CD4-positive, alpha-beta T cell (primary cell): ENCODE measurements at regions of chr15 and their contacts with region 1.

Region 1: GRCh38 chr15:56052395-56053045 is 59.1 kb upstream of the NEDD4 start:
- DNase-seq: peak in 4 of 14 experiments; percentile 13 to 68 (median 58)
- ATAC-seq: peak; percentile 79
- H3K4me3 ChIP-seq: no peak overlapping the region
- H3K4me3 Mint-ChIP-seq: no peak overlapping the region
- H3K27ac ChIP-seq: no peak overlapping the region
- H3K27ac Mint-ChIP-seq: no peak overlapping the region
- H3K4me1 ChIP-seq: no peaks in the 10 kb centered on the region
- H3K4me1 Mint-ChIP-seq: no peaks in the 10 kb centered on the region
- H3K27me3 ChIP-seq: no peaks in the 10 kb centered on the region
- H3K27me3 Mint-ChIP-seq: no peaks in the 10 kb centered on the region
- CTCF ChIP-seq: peak; percentile 76

Region 2: GRCh38 chr15:55734641-55735040 is 317.9 kb before region 1 on chr15:
- CTCF ChIA-PET with region 1: no interaction called
- POLR2A ChIA-PET with region 1: no interaction called
- intact Hi-C with region 1: no loop called
- DNase-seq: no peak
- ATAC-seq: no peak
- H3K4me3 ChIP-seq: no peak overlapping the region
- H3K4me3 Mint-ChIP-seq: no peak overlapping the region
- H3K27ac ChIP-seq: no peak overlapping the region
- H3K27ac Mint-ChIP-seq: no peak overlapping the region
- H3K4me1 ChIP-seq: no peaks in the 10 kb centered on the region
- H3K4me1 Mint-ChIP-seq: no peaks in the 10 kb centered on the region
- H3K27me3 ChIP-seq: peaks cover 6 to 14% of the 10 kb centered on the region in 2 experiments
- H3K27me3 Mint-ChIP-seq: peaks cover 30% of the 10 kb centered on the region
- CTCF ChIP-seq: no peak

Region 3: DNA sequence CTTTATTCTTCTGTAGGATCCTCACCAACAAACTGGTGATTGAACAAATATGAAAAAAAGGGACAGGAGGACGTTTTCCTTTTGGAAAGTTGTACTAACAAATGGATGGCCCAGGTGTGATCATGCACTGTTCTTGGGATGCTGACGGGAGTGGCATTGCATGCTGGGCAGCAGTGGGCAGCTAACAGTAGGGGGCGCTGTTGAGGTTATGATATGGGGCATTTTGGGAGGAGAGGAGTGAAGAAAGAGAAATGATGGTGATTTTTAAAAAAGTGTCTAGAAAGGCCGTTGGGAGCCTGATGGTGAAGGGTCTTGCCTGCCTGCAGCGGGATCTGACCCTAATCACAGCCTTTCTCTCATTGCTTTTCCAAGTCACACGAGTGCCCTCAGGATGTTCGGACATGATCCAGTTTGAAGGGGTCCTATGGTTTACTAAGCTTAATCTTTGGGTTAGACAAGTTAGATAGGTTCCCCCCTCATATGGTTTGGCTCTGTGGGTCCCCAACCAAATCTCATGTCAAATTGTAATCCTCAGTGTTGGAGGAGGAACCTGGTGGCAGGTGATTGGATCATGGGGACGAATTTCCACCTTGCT is 263.4 kb before region 1 on chr15:
- CTCF ChIA-PET with region 1: no interaction called
- POLR2A ChIA-PET with region 1: no interaction called
- intact Hi-C with region 1: loop called (anchors 1 to 2 kb)
- DNase-seq: peak; percentile 9 to 58 (median 26)
- ATAC-seq: no peak
- H3K4me3 ChIP-seq: no peak overlapping the region
- H3K4me3 Mint-ChIP-seq: no peak overlapping the region
- H3K27ac ChIP-seq: no peak overlapping the region
- H3K27ac Mint-ChIP-seq: no peak overlapping the region
- H3K4me1 ChIP-seq: no peaks in the 10 kb centered on the region
- H3K4me1 Mint-ChIP-seq: no peaks in the 10 kb centered on the region
- H3K27me3 ChIP-seq: peaks cover 0 to 3% of the 10 kb centered on the region in 2 experiments
- H3K27me3 Mint-ChIP-seq: peaks cover 9% of the 10 kb centered on the region
- CTCF ChIP-seq: peak; percentile 55

Region 4: GRCh38 chr15:55846116-55846707 is 206.3 kb before region 1 on chr15:
- CTCF ChIA-PET with region 1: no interaction called
- POLR2A ChIA-PET with region 1: no interaction called
- intact Hi-C with region 1: loop called in 1 of 2 experiments (anchors 5 kb)
- DNase-seq: peak in 9 of 14 experiments; percentile 2 to 75 (median 20)
- ATAC-seq: peak; percentile 73
- H3K4me3 ChIP-seq: no peak overlapping the region
- H3K4me3 Mint-ChIP-seq: no peak overlapping the region
- H3K27ac ChIP-seq: no peak overlapping the region
- H3K27ac Mint-ChIP-seq: no peak overlapping the region
- H3K4me1 ChIP-seq: no peaks in the 10 kb centered on the region
- H3K4me1 Mint-ChIP-seq: no peaks in the 10 kb centered on the region
- H3K27me3 ChIP-seq: no peaks in the 10 kb centered on the region
- H3K27me3 Mint-ChIP-seq: no peaks in the 10 kb centered on the region
- CTCF ChIP-seq: peak; percentile 76

Region 5: DNA sequence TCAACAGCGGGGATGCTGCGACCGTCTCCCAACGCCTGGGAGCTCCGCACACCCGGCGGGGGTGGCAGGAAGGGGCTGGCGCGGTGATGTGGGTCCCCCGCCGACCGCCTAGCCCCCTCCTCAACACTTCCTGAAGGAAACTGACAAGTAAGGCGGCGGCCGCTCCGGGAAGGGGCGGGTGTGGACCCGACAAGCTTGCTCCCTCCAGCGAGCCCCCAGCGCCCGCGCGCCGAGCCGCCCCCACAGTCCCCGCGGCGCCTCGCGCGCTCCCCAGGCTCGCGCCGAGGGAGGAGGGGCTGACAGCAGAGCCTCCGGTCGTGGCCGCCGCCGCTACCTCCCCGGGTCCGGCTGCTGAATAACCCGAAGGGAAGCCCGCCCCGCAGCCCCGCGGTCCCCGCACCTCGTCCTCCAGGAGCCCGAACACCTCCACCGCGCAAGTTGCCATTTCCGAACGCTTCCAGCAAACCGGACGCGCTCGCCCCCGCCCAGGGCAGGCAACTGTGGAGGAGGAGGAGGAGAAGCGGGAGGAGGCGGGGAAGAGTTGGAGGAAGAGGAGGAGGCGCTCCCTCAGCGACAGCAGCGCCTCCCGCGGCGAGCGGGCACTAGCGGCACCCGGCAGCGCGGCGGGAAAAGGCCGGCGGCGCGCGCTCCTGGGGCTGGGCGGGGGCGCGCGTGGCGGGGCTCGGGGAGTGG is 59.3 kb before region 1 on chr15 and contains the start of gene NEDD4:
- CTCF ChIA-PET with region 1: interaction called, 3 read pairs
- POLR2A ChIA-PET with region 1: no interaction called
- intact Hi-C with region 1: loop called (anchors 2 kb)
- DNase-seq: peak; percentile 37 to 89 (median 62)
- ATAC-seq: peak; percentile 90
- H3K4me3 ChIP-seq: peak within 1 kb of the TSS; percentile 86
- H3K4me3 Mint-ChIP-seq: peak within 1 kb of the TSS; percentile 96
- H3K27ac ChIP-seq: no peak within 1 kb of the TSS
- H3K27ac Mint-ChIP-seq: peak within 1 kb of the TSS; percentile 21
- H3K4me1 ChIP-seq: peaks cover 9% of the 10 kb centered on the region
- H3K4me1 Mint-ChIP-seq: peaks cover 22% of the 10 kb centered on the region
- H3K27me3 ChIP-seq: peaks cover 0 to 5% of the 10 kb centered on the region in 2 experiments
- H3K27me3 Mint-ChIP-seq: peaks cover 3% of the 10 kb centered on the region
- CTCF ChIP-seq: peak; percentile 17
- total RNA-seq, gene NEDD4: 2.6 to 2.7 TPM